H1 (cell line): ENCODE measurements at regions of chr5 and their contacts with region 1.

Region 1: GRCh38 chr5:39217365-39218281 is 1.7 kb downstream of the FYB1 start:
- DNase-seq: peak in 1 of 2 experiments; percentile 83
- H3K4me3 ChIP-seq: no peak overlapping the region
- H3K27ac ChIP-seq: no peak overlapping the region
- H3K4me1 ChIP-seq: peaks cover 0 to 2% (median 0%) of the 10 kb centered on the region in 4 experiments; a peak in 1 of 7 replicates
- H3K27me3 ChIP-seq: no peaks in the 10 kb centered on the region
- CTCF ChIP-seq: peak; percentile 43 to 97 (median 84)
- EP300 ChIP-seq: no peak
- POLR2A ChIP-seq: no peak
- RAD21 ChIP-seq: peak; percentile 80 to 88

Region 2: GRCh38 chr5:39092581-39093350 is 124.9 kb before region 1 on chr5:
- CTCF ChIA-PET with region 1: no interaction called
- POLR2A ChIA-PET with region 1: no interaction called
- DNase-seq: no peak
- H3K4me3 ChIP-seq: no peak overlapping the region
- H3K27ac ChIP-seq: no peak overlapping the region
- H3K4me1 ChIP-seq: no peaks in the 10 kb centered on the region
- H3K27me3 ChIP-seq: no peaks in the 10 kb centered on the region
- CTCF ChIP-seq: no peak
- EP300 ChIP-seq: no peak
- POLR2A ChIP-seq: no peak
- RAD21 ChIP-seq: no peak

Region 3: DNA sequence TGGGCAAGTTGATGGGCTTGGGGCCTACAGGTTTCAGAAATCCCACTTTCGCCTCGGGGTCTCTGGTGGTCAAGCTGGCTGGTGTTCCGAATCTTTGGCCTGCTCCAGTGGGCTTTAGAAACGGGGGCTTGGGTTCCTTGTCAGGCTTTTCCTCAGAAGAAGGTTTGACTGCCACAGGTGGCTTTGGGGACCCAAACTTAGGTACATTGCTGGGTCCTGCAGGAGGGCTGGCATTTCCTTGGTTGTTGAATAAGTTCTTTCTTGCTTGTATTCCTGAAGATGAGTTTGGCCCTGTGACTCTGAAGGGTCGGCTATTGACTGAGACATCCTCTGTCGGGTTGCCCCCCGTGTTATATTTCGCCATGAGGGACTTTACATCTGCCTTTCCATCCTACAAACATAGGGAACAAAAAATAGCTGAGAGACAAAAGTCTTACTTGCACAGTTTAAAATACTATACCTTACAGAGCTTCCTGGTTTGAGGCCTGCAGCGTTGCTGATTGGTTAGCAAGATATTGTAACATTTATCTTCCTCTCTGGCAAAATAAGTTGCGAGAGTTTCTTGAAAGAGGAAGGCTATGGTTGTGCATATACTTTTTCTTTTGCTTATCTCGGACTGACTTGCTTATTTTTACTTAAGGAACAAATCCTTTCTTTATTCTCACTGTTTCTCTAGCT is 14.9 kb before region 1 on chr5:
- CTCF ChIA-PET with region 1: interaction called, 44 read pairs
- POLR2A ChIA-PET with region 1: no interaction called
- DNase-seq: no peak
- H3K4me3 ChIP-seq: no peak overlapping the region
- H3K27ac ChIP-seq: no peak overlapping the region
- H3K4me1 ChIP-seq: no peaks in the 10 kb centered on the region
- H3K27me3 ChIP-seq: no peaks in the 10 kb centered on the region
- CTCF ChIP-seq: no peak
- EP300 ChIP-seq: no peak
- POLR2A ChIP-seq: no peak
- RAD21 ChIP-seq: no peak

Region 4: DNA sequence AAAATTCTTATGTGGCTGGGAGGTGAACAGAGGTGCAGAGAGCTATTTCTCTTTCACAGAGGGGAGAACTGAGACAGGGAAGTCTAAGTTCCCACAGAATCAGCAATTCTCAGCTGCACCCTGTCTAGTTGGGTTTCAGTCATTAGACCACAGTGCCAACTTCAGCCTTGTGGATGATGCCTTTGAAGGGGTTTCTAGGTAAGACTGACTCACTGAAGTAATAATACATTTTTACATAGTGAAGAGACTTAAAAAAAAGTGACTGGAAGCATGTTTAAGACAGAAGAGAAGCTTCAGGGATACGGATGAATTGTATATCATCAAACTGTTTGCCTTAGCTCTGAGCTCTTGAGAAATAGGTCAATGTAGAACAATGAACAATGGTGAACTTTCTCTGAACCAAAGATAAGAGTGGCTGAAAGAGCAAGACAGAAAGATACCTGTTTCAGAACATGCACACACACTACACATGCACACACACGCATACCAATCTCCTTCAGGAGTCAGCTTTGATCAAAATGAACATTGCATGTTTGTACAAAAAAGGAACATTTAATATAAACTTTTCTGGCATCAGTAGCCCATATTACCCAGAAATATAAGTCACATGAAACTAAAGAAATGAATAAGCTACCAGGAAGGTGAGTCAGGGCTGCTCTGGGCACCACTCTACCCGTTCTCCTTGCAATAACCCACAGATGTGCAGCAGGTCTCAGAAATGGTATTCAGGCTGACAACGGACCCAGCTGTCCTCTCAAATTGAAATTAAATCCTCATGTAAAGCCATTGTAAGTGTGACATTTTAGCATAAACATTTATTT is 14.3 kb after region 1 on chr5:
- CTCF ChIA-PET with region 1: interaction called, 34 read pairs
- POLR2A ChIA-PET with region 1: no interaction called
- DNase-seq: no peak
- H3K4me3 ChIP-seq: no peak overlapping the region
- H3K27ac ChIP-seq: no peak overlapping the region
- H3K4me1 ChIP-seq: no peaks in the 10 kb centered on the region
- H3K27me3 ChIP-seq: no peaks in the 10 kb centered on the region
- CTCF ChIP-seq: no peak
- EP300 ChIP-seq: no peak
- POLR2A ChIP-seq: no peak
- RAD21 ChIP-seq: no peak

Region 5: GRCh38 chr5:39283231-39283818 is 65.7 kb after region 1 on chr5:
- CTCF ChIA-PET with region 1: interaction called, 28 read pairs
- POLR2A ChIA-PET with region 1: no interaction called
- DNase-seq: peak; percentile 17 to 49
- H3K4me3 ChIP-seq: no peak overlapping the region
- H3K27ac ChIP-seq: no peak overlapping the region
- H3K4me1 ChIP-seq: no peaks in the 10 kb centered on the region
- H3K27me3 ChIP-seq: no peaks in the 10 kb centered on the region
- CTCF ChIP-seq: peak in 2 of 3 experiments; percentile 65 to 73; a peak in 3 of 4 replicates
- EP300 ChIP-seq: no peak
- POLR2A ChIP-seq: no peak
- RAD21 ChIP-seq: peak; percentile 79 to 86

Region 6: GRCh38 chr5:39547553-39548154 is 330.0 kb after region 1 on chr5:
- CTCF ChIA-PET with region 1: interaction called, 19 read pairs
- POLR2A ChIA-PET with region 1: no interaction called
- DNase-seq: no peak
- H3K4me3 ChIP-seq: no peak overlapping the region
- H3K27ac ChIP-seq: no peak overlapping the region
- H3K4me1 ChIP-seq: peaks cover 0 to 4% (median 0%) of the 10 kb centered on the region in 4 experiments; a peak in 1 of 7 replicates
- H3K27me3 ChIP-seq: no peaks in the 10 kb centered on the region
- CTCF ChIP-seq: peak in 2 of 3 experiments; percentile 59 to 67; a peak in 3 of 4 replicates
- EP300 ChIP-seq: no peak
- POLR2A ChIP-seq: no peak
- RAD21 ChIP-seq: peak; percentile 74

Region 7: DNA sequence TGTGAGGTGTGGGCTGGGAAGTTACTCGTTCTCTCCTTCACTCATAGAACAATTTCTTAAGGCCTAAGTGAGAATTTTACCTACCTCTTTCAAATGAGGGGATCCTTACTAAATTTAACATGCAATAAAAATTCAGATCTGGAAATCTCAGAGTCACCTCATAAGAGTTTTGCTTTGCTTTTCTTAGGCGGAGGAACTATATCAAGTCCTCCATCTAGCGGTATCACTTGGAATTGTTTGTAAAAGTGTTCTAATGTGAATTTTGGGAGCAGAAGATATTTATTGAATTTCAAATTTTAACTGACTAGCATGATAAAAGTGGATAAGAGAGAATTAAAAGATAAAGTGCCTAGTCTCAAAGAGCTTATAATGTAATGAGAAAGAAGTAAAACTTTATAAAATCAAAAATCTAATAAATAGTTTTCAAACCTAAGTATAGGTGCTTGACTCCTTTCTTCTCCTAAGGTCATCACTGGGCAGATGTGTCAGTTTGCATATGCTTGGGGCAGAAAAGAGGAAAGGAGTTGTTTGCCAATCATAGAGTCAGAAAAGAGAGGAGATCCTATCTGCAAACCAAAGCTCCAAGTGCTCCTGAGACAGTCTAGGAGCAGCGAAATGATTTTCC is 352.9 kb after region 1 on chr5:
- CTCF ChIA-PET with region 1: interaction called, 21 read pairs
- POLR2A ChIA-PET with region 1: no interaction called
- DNase-seq: no peak
- H3K4me3 ChIP-seq: no peak overlapping the region
- H3K27ac ChIP-seq: no peak overlapping the region
- H3K4me1 ChIP-seq: no peaks in the 10 kb centered on the region
- H3K27me3 ChIP-seq: no peaks in the 10 kb centered on the region
- CTCF ChIP-seq: peak in 2 of 3 experiments; percentile 41 to 49; a peak in 2 of 4 replicates
- EP300 ChIP-seq: no peak
- POLR2A ChIP-seq: no peak
- RAD21 ChIP-seq: peak; percentile 61 to 73